Head of caudate nucleus (tissue), 42 donors: ENCODE measurements at regions of chr11 and their contacts with region 1.

Region 1: DNA sequence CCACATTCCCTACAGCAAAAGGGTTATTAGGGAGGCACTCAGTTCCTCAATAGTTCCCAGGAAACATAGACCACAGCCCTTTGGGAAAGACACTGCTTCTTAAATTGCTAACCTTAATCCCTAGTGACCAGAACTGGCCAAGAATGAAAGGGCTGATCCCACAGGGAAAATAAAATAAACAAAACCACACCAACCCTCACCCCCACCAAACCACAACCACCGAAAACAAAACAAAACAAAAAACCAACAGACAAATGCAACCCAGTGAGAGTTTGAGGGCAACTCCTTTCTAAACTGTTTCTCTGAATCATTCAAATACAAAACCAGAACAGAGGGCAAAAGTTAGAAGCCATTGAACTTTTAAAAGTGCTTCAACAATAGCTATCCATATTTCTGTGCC is 57.2 kb downstream of the NAV2 start:
- DNase-seq: no peak

Region 2: GRCh38 chr11:19342036-19342435 is 427.8 kb before region 1 on chr11:
- intact Hi-C with region 1: no loop called
- DNase-seq: no peak

Region 3: DNA sequence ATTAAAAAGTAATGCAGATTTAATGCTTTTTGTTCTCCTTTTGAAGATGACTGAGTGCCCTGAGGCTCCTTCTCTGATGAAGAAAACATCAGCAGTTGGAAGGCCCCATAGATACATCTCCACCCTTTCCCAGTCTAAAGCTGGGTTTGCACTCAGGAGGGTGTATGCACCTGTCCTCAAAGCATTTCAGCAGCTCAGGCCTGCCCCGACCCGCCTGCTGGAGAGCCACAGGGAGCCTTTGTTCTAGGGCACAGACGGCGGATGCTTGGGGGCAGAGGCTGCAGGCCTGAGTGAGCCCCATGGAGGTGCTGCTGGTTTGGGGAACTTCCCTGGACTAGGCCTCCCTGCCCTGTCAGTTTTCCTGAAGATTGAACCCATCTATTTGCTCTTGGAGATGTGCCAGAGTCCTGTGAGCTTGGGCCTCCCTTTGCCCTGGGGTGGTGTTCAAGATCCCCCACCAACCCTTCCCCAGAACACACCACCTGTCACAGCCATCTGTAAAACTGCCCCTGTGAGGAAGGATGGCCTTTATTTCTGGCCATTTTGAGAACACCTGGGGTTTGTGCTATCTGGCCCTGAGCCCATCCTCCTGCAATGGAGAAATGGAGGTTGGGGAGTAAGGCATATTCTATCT is 102.8 kb after region 1 on chr11:
- intact Hi-C with region 1: loop called (anchors 10 kb)
- DNase-seq: no peak